Posterior vena cava (tissue), 2 donors: ENCODE measurements at regions of chr9 and their contacts with region 1.

Region 1: GRCh38 chr9:4879112-4879558 is 86.4 kb downstream of the RCL1 start:
- DNase-seq: no peak

Region 2: DNA sequence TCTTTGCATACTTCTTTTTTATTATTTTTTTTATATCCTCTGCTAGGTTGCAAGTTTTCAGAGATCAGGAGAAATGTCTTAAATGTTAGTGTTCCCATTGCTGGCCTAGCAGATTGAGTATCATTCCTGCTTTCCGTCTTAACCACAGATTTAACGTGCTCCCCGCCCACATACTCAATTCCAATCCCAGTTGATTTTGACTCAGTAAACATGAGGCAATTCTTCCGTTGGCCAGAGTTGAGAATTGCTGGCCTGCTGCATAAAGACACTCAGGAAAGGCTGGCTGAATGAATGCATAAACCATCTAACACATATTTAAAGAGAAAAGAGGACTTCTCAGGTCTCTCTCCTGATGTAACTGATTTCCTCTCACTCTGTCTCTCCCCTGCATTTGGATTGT is 263.9 kb before region 1 on chr9:
- intact Hi-C with region 1: no loop called
- DNase-seq: no peak

Region 3: DNA sequence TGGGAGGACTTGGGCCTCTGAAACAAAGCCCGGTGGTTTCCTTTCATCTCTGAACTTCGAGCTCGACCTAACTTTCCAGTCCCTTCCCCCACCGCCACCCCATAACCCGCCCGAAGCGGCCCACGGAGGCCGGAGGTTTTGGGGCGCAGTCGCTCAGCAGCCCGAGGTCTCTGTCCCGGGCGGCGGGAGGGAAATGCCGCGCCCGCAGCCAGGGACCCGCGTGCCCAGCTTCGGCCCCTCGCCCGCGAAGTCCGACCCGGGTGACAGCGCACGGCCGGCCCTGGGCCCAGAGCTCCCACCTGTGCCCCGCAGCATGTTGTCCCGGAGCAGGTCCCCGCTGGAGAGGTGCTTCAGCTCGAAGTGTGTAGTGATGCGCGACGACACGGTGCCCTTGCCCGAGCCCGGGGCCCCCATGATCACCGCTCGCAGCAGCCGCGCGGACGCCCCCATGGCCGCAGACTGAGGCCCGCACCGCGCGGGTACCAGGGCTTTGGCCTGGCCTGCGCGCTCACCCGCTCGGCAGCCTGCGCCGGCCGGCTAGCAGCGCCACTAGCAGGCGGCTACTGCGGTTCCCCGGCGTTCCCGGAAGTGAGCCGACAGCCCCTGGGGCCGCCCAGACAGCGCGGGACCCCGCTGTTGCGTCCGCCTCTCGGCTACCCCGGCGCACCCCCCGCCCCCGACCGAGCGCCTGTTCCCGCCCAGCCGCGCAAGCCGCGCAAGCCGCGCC is 138.3 kb before region 1 on chr9 and contains the start of gene AK3:
- intact Hi-C with region 1: no loop called
- DNase-seq: peak; percentile 96
- total RNA-seq, gene AK3: 48.4 to 50.8 TPM

Region 4: GRCh38 chr9:4923580-4924544 is 44.7 kb after region 1 on chr9:
- intact Hi-C with region 1: loop called in 1 of 2 experiments (anchors 2 kb)
- DNase-seq: no peak

Region 5: DNA sequence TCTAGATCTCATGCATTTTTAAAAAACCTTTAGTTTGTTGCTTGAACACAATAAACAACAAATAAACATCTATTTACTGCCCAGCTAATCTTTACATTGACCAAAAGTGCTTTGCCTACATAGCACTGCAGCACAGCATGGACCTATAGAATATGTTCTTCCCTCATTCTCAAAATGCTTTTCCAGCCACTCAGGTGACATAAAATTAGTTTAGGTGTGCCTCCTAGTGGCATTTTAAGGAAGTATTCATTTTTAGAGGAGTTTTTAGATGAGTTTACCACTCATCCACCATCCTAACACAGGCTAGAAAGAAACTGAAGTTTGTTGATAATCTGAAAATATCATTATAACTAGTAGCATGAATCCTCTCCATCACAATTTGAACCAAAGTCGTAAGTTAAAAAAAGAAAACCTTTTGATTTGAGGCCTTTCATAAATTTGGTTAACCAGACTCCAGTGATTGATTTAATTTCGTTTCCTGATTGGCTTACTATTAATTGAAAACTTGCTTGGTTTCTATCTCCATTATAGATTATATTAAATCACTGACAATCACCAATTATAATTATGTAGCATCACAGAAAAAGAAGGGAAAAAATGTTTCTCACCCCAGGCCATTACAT is 546.0 kb after region 1 on chr9:
- intact Hi-C with region 1: no loop called
- DNase-seq: no peak